ENCODE measurements at regions of chr5 and their contacts with region 1.

Region 1: GRCh38 chr5:181207214-181208107 is 2.5 kb upstream of the TRIM7 start:
- DNase-seq: peak; percentile 94
- H3K4me3 Mint-ChIP-seq: peak overlapping the region; percentile 75
- H3K27ac Mint-ChIP-seq: peak overlapping the region; percentile 97
- H3K4me1 Mint-ChIP-seq: peaks cover 49% of the 10 kb centered on the region
- H3K27me3 Mint-ChIP-seq: peaks cover 41% of the 10 kb centered on the region
- CTCF ChIP-seq: no peak

Region 2: GRCh38 chr5:180809403-180810209 is 397.9 kb before region 1 on chr5:
- CTCF ChIA-PET with region 1: interaction called, 11 read pairs
- intact Hi-C with region 1: no loop called
- DNase-seq: peak; percentile 90
- H3K4me3 Mint-ChIP-seq: peak overlapping the region; percentile 72
- H3K27ac Mint-ChIP-seq: peak overlapping the region; percentile 44
- H3K4me1 Mint-ChIP-seq: peaks cover 56% of the 10 kb centered on the region
- H3K27me3 Mint-ChIP-seq: no peaks in the 10 kb centered on the region
- CTCF ChIP-seq: no peak

Region 3: GRCh38 chr5:181181650-181182565 is 25.6 kb before region 1 on chr5:
- CTCF ChIA-PET with region 1: interaction called, 15 read pairs
- intact Hi-C with region 1: no loop called
- DNase-seq: peak; percentile 84
- H3K4me3 Mint-ChIP-seq: no peak overlapping the region
- H3K27ac Mint-ChIP-seq: no peak overlapping the region
- H3K4me1 Mint-ChIP-seq: peaks cover 28% of the 10 kb centered on the region
- H3K27me3 Mint-ChIP-seq: peaks cover 17% of the 10 kb centered on the region
- CTCF ChIP-seq: peak; percentile 87

Region 4: DNA sequence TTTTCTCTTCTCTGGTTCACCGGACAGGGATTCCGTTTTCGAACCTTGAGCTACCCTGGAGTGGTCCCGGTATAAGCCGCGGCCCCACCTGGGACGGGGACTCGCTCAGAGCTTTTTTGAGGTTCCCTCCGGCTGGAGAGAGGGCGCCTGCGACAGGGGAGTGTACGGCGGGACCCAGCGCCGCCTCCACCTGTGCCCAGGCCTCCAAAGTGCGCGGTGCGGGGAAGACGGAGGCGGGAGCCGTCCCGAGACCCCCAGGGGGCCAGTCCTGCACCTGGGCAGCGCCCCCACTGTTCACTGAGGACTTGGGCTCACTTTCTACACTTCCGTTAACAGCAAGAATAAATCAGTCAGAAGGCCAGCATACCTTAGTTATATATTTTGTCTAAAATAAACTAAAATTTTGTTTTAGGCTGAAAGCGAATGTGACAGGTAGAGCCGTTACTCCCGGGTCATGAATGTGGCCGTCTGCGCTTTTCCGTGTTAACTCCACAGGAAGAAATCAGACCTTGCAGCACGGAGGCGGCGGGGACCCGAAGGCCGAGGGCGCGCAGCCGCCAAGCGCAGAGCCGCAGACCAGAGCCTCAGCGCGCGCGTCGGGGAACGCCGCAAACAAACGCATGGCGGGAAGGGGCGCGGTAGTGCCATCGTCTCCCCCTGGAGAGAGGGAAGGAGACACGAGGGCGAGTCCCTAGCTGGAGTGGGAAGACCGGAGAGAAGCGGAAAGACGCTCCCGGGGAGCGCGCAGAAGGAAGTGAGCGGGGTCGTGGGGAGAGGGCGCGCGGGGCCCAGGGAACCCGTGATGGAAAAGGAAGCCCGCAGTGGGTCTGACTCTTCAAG is 16.6 kb before region 1 on chr5:
- CTCF ChIA-PET with region 1: interaction called, 24 read pairs
- intact Hi-C with region 1: loop called (anchors 1 kb)
- DNase-seq: peak; percentile 59
- H3K4me3 Mint-ChIP-seq: peak overlapping the region; percentile 93
- H3K27ac Mint-ChIP-seq: peak overlapping the region; percentile 100
- H3K4me1 Mint-ChIP-seq: peaks cover 49% of the 10 kb centered on the region
- H3K27me3 Mint-ChIP-seq: peaks cover 17% of the 10 kb centered on the region
- CTCF ChIP-seq: peak; percentile 58

Region 5: GRCh38 chr5:181217803-181218062 is 10.3 kb after region 1 on chr5:
- CTCF ChIA-PET with region 1: interaction called, 6 read pairs
- intact Hi-C with region 1: loop called (anchors 1 kb)
- DNase-seq: peak; percentile 70
- H3K4me3 Mint-ChIP-seq: peak overlapping the region; percentile 68
- H3K27ac Mint-ChIP-seq: peak overlapping the region; percentile 91
- H3K4me1 Mint-ChIP-seq: peaks cover 51% of the 10 kb centered on the region
- H3K27me3 Mint-ChIP-seq: peaks cover 8% of the 10 kb centered on the region
- CTCF ChIP-seq: no peak